Psoas muscle (tissue), 8 donors: ENCODE measurements at regions of chr6 and their contacts with region 1.

Region 1: GRCh38 chr6:82217018-82217586 is 30.4 kb downstream of the IBTK start:
- DNase-seq: no peak
- ATAC-seq: no peak
- H3K4me3 ChIP-seq: no peak overlapping the region
- H3K27ac ChIP-seq: no peak overlapping the region
- H3K4me1 ChIP-seq: no peaks in the 10 kb centered on the region
- H3K27me3 ChIP-seq: no peaks in the 10 kb centered on the region
- CTCF ChIP-seq: no peak

Region 2: GRCh38 chr6:83153883-83154521 is 936.9 kb after region 1 on chr6:
- intact Hi-C with region 1: loop called (anchors 10 kb)
- DNase-seq: no peak
- ATAC-seq: no peak
- H3K4me3 ChIP-seq: no peak overlapping the region
- H3K27ac ChIP-seq: no peak overlapping the region
- H3K4me1 ChIP-seq: no peaks in the 10 kb centered on the region
- H3K27me3 ChIP-seq: no peaks in the 10 kb centered on the region
- CTCF ChIP-seq: no peak